Endothelial cell of umbilical vein (primary cell): ENCODE measurements at regions of chr2 and their contacts with region 1.

Region 1: GRCh38 chr2:227471924-227472264 is at the start of gene AGFG1:
- DNase-seq: peak; percentile 85
- H3K4me3 ChIP-seq: peak within 1 kb of the TSS; percentile 76 to 100 (median 85)
- H3K27ac ChIP-seq: peak within 1 kb of the TSS; percentile 67
- H3K4me1 ChIP-seq: peaks cover 15% of the 10 kb centered on the region
- H3K27me3 ChIP-seq: no peaks in the 10 kb centered on the region
- CTCF ChIP-seq: peak; percentile 98 to 99
- POLR2A ChIP-seq: peak; percentile 55
- total RNA-seq, gene AGFG1: 69.2 and 87.9 TPM in 2 replicates

Region 2: DNA sequence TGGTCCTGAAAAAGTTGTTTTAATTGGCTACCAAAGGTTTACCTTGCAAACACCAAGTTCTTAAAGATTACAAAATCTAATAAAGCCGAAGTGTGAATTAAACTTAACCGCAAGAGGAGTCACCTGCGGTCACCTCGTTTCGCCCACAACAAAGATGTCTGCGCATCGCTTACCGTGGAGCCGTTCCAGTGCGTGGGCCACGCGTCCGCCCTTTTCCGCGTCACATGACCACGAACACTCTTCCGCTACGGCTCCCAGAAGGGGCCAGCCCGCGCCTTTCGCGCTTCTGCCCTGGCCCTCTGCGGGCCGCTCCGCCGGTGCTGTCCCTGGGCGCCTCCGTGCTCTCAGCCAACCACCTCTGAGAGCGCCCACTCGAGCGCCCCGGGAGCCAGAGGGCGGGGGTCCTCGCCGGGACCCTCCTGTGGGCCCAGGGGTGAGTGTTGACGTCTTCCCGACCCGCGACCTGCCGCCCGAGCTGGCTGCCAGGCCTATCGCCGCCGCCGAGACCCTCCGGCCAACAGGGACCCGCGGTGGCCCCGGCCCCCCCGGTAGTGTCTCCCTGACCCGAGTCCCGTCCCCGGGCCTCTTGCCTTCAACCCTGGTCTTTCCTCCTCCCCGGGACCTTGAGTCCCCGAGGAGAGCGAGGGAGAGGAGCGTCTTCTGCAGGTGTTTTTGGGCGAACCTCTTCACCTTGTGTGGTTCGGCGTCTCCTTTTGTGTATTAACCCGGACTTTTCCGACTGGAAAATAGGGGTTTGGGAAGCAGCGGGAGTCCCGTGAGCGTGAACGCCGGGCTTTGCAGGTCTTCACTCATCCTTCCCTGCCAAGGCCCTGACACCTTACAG is 146.7 kb before region 1 on chr2 and contains the start of gene MFF:
- CTCF ChIA-PET with region 1: no interaction called
- POLR2A ChIA-PET with region 1: no interaction called
- dilution Hi-C with region 1: no loop called
- intact Hi-C with region 1: loop called (anchors 1 kb)
- DNase-seq: peak; percentile 90
- H3K4me3 ChIP-seq: peak within 1 kb of the TSS; percentile 82 to 94 (median 85)
- H3K27ac ChIP-seq: peak within 1 kb of the TSS; percentile 59
- H3K4me1 ChIP-seq: peaks cover 12% of the 10 kb centered on the region
- H3K27me3 ChIP-seq: no peaks in the 10 kb centered on the region
- CTCF ChIP-seq: no peak
- POLR2A ChIP-seq: peak; percentile 82
- total RNA-seq, gene MFF: 60.4 and 65.1 TPM in 2 replicates

Region 3: GRCh38 chr2:227347117-227347516 is 124.8 kb before region 1 on chr2:
- CTCF ChIA-PET with region 1: no interaction called
- POLR2A ChIA-PET with region 1: no interaction called
- dilution Hi-C with region 1: no loop called
- intact Hi-C with region 1: no loop called
- DNase-seq: no peak
- H3K4me3 ChIP-seq: no peak overlapping the region
- H3K27ac ChIP-seq: no peak overlapping the region
- H3K4me1 ChIP-seq: no peaks in the 10 kb centered on the region
- H3K27me3 ChIP-seq: no peaks in the 10 kb centered on the region
- CTCF ChIP-seq: no peak
- POLR2A ChIP-seq: no peak

Region 4: GRCh38 chr2:227415538-227416424 is 56.1 kb before region 1 on chr2:
- CTCF ChIA-PET with region 1: interaction called, 3 read pairs
- POLR2A ChIA-PET with region 1: no interaction called
- dilution Hi-C with region 1: no loop called
- intact Hi-C with region 1: loop called (anchors 1 kb)
- DNase-seq: peak; percentile 85
- H3K4me3 ChIP-seq: no peak overlapping the region
- H3K27ac ChIP-seq: peak overlapping the region; percentile 52
- H3K4me1 ChIP-seq: peaks cover 8% of the 10 kb centered on the region
- H3K27me3 ChIP-seq: no peaks in the 10 kb centered on the region
- CTCF ChIP-seq: no peak
- POLR2A ChIP-seq: peak; percentile 51

Region 5: DNA sequence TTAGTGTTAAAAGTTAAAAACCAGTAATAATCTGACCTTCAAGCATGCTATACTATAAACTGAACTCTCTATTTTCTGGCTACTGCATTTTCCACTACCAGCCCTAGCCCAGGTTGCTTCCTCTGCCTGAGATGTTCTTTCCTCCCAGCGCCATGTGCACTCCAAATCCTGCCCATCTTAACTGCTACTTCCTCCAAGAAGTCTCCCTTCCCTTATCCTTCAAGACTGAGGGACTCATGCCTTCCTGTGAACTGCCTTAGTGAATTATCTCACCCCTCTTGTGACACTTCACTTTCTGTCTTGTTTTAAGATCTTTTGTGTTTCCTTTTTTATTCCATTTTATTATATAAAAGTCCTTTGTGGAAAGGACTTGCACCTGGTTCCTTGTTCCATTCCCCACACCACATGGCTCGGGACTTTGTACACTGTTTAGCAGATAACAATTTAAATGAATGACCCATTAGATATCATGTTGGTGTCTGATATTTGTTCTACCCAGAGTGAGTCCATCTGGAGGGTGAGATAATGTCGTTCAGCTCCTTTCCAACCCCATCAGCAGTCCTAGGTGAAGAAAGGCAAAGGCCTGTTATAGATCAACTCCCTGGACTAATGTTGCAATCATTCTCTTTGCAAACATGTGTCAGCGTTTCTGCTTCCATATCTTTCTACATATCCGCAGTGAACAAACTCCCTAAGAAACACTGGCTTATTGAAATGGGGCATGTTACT is 20.8 kb before region 1 on chr2:
- CTCF ChIA-PET with region 1: no interaction called
- POLR2A ChIA-PET with region 1: no interaction called
- dilution Hi-C with region 1: no loop called
- intact Hi-C with region 1: no loop called
- DNase-seq: no peak
- H3K4me3 ChIP-seq: no peak overlapping the region
- H3K27ac ChIP-seq: no peak overlapping the region
- H3K4me1 ChIP-seq: no peaks in the 10 kb centered on the region
- H3K27me3 ChIP-seq: no peaks in the 10 kb centered on the region
- CTCF ChIP-seq: no peak
- POLR2A ChIP-seq: no peak

Region 6: DNA sequence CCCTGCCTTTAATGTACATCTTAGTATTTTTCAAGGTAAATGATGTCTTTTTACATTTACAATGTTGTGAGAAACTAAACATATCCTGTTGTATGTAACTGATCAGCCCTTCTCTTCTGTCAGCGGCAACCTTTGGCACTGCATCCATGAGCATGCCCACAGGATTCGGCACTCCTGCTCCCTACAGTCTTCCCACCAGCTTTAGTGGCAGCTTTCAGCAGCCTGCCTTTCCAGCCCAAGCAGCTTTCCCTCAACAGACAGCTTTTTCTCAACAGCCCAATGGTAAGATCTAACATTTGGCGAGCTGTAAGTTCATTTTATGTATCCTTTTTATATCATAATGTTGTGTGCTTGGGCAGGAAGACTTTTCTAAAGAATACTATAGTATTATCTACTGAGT is 79.9 kb after region 1 on chr2:
- CTCF ChIA-PET with region 1: no interaction called
- POLR2A ChIA-PET with region 1: no interaction called
- dilution Hi-C with region 1: no loop called
- intact Hi-C with region 1: loop called (anchors 5 kb)
- DNase-seq: no peak
- H3K4me3 ChIP-seq: no peak overlapping the region
- H3K27ac ChIP-seq: no peak overlapping the region
- H3K4me1 ChIP-seq: no peaks in the 10 kb centered on the region
- H3K27me3 ChIP-seq: no peaks in the 10 kb centered on the region
- CTCF ChIP-seq: no peak
- POLR2A ChIP-seq: no peak

Region 7: GRCh38 chr2:227884511-227884947 is 412.6 kb after region 1 on chr2:
- CTCF ChIA-PET with region 1: no interaction called
- POLR2A ChIA-PET with region 1: no interaction called
- dilution Hi-C with region 1: no loop called
- intact Hi-C with region 1: loop called (anchors 5 kb)
- DNase-seq: peak; percentile 77
- H3K4me3 ChIP-seq: no peak overlapping the region
- H3K27ac ChIP-seq: no peak overlapping the region
- H3K4me1 ChIP-seq: peaks cover 4% of the 10 kb centered on the region
- H3K27me3 ChIP-seq: no peaks in the 10 kb centered on the region
- CTCF ChIP-seq: peak; percentile 95 to 96
- POLR2A ChIP-seq: no peak